MCF 10A (cell line): ENCODE measurements at regions of chr1 and their contacts with region 1.

Region 1: GRCh38 chr1:6367381-6368012 is 26.1 kb downstream of the ACOT7 start:
- DNase-seq: peak; percentile 69
- H3K4me3 Mint-ChIP-seq: no peak overlapping the region
- H3K27ac Mint-ChIP-seq: peak overlapping the region; percentile 64
- H3K4me1 Mint-ChIP-seq: peaks cover 17% of the 10 kb centered on the region
- H3K27me3 Mint-ChIP-seq: no peaks in the 10 kb centered on the region
- CTCF ChIP-seq: no peak

Region 2: GRCh38 chr1:6385488-6386191 is 18.1 kb after region 1 on chr1:
- CTCF ChIA-PET with region 1: interaction called, 75 read pairs
- POLR2A ChIA-PET with region 1: interaction called, 128 read pairs
- intact Hi-C with region 1: loop called (anchors 1 kb)
- DNase-seq: peak; percentile 97
- H3K4me3 Mint-ChIP-seq: peak overlapping the region; percentile 89
- H3K27ac Mint-ChIP-seq: peak overlapping the region; percentile 81
- H3K4me1 Mint-ChIP-seq: peaks cover 25% of the 10 kb centered on the region
- H3K27me3 Mint-ChIP-seq: no peaks in the 10 kb centered on the region
- CTCF ChIP-seq: no peak

Region 3: GRCh38 chr1:6393400-6394187 is 26.1 kb after region 1 on chr1 and contains the start of gene ACOT7:
- CTCF ChIA-PET with region 1: interaction called, 188 read pairs
- POLR2A ChIA-PET with region 1: interaction called, 38 read pairs
- intact Hi-C with region 1: loop called (anchors 1 kb)
- DNase-seq: peak; percentile 87
- H3K4me3 Mint-ChIP-seq: peak within 1 kb of the TSS; percentile 75
- H3K27ac Mint-ChIP-seq: peak within 1 kb of the TSS; percentile 91
- H3K4me1 Mint-ChIP-seq: no peaks in the 10 kb centered on the region
- H3K27me3 Mint-ChIP-seq: no peaks in the 10 kb centered on the region
- CTCF ChIP-seq: peak; percentile 16
- total RNA-seq, gene ACOT7: 110 and 117 TPM in 2 replicates

Region 4: GRCh38 chr1:6401673-6402072 is 34.2 kb after region 1 on chr1:
- CTCF ChIA-PET with region 1: interaction called, 188 read pairs
- POLR2A ChIA-PET with region 1: interaction called, 9 read pairs
- intact Hi-C with region 1: loop called (anchors 1 kb)
- DNase-seq: no peak
- H3K4me3 Mint-ChIP-seq: no peak overlapping the region
- H3K27ac Mint-ChIP-seq: no peak overlapping the region
- H3K4me1 Mint-ChIP-seq: no peaks in the 10 kb centered on the region
- H3K27me3 Mint-ChIP-seq: no peaks in the 10 kb centered on the region
- CTCF ChIP-seq: no peak